ENCODE measurements at regions of chr12 and their contacts with region 1.

Region 1: GRCh38 chr12:120534203-120534702 is at the start of gene RNF10:
- DNase-seq: peak; percentile 78
- H3K4me3 Mint-ChIP-seq: peak within 1 kb of the TSS; percentile 92
- H3K27ac Mint-ChIP-seq: peak within 1 kb of the TSS; percentile 94
- H3K4me1 Mint-ChIP-seq: peaks cover 47% of the 10 kb centered on the region
- H3K27me3 Mint-ChIP-seq: no peaks in the 10 kb centered on the region
- total RNA-seq, gene RNF10: 159 to 166 TPM

Region 2: DNA sequence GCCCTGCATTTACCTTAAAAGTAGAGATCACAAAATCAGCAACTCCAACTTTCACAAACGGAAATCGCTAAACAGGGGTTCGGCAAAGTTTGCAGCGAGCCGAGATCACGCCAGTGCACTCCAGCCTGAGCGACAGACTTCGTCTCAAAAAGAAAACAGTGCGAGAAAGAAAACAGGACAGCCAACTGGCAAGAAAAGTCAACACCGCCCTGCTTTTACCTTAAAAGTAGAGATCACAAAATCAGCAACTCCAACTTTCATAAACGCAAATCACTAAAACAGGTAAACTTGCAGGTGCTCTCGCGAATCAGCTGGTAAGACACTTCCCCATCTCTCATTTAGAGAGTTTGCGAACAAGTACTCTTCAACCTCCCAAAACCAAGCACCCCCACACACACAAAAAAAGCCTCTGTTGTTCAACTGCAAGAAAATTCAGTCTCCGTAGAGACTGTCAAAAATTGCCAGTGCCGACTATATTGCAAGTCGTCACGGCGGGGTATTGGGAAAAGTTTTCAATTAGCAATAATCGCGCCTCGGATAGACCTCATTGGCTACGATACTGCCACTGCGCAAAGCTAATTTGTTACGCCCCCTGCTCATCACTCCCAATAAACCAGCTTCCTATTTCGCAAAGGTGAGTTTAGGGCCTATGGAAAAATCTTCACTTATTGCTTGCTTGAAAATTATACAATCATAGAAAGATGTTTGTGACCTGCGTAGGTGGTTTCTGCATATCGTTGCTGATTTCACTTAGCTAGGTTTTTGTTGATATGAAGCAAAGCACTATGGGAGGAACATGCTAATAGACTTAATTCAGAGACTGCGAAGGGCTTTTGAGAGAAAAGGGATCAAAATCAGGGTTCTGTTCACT is 241.4 kb before region 1 on chr12 and contains the start of gene RNU4-1:
- CTCF ChIA-PET with region 1: no interaction called
- intact Hi-C with region 1: loop called (anchors 1 kb)
- DNase-seq: peak; percentile 88
- H3K4me3 Mint-ChIP-seq: no peak within 1 kb of the TSS
- H3K27ac Mint-ChIP-seq: no peak within 1 kb of the TSS
- H3K4me1 Mint-ChIP-seq: peaks cover 6% of the 10 kb centered on the region
- H3K27me3 Mint-ChIP-seq: no peaks in the 10 kb centered on the region
- total RNA-seq, gene RNU4-1: 685 to 1,294 TPM

Region 3: DNA sequence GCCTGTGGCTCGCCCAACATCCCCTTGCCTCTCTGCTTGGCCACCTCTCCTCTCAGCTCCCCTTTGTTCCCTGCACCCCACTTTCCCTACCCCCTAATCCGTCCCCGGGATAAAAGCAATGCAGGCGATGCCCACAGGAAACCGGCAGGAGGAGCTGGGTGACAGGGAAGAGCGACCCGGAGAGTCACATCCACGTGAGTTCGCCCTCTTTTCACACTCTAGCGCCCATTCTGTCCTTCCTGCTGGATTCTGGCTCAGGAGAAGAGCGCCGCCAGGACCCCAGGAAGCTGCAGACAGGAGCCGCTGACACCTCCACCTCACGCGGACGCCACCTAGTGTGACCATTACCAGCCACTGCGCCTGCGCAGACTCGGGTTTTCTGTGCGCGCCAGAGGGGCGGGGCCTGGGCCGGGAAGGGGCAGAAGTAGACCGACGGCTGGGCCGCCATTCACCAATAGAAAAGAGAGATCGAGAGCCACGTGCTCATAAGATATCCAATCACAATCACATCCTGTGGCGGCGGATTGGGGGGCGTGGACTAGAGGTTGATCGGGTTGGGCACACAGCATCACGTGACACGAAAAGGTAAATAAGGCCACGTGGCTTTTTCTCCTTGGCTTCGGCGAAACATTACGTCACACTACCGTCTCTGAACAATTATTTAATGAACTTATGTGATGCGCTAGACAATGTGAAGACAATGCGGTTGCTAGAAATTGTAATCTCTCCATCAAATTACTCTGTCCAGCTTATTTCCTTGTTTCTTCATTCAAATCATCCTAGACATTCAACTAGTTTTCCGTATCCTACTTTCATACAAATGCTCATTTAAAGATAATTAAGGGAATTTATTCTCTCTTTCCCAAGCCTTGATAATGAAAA is 216.8 kb before region 1 on chr12:
- CTCF ChIA-PET with region 1: no interaction called
- intact Hi-C with region 1: loop called (anchors 1 kb)
- DNase-seq: peak; percentile 100
- H3K4me3 Mint-ChIP-seq: peak overlapping the region; percentile 87
- H3K27ac Mint-ChIP-seq: peak overlapping the region; percentile 88
- H3K4me1 Mint-ChIP-seq: peaks cover 11% of the 10 kb centered on the region
- H3K27me3 Mint-ChIP-seq: no peaks in the 10 kb centered on the region

Region 4: DNA sequence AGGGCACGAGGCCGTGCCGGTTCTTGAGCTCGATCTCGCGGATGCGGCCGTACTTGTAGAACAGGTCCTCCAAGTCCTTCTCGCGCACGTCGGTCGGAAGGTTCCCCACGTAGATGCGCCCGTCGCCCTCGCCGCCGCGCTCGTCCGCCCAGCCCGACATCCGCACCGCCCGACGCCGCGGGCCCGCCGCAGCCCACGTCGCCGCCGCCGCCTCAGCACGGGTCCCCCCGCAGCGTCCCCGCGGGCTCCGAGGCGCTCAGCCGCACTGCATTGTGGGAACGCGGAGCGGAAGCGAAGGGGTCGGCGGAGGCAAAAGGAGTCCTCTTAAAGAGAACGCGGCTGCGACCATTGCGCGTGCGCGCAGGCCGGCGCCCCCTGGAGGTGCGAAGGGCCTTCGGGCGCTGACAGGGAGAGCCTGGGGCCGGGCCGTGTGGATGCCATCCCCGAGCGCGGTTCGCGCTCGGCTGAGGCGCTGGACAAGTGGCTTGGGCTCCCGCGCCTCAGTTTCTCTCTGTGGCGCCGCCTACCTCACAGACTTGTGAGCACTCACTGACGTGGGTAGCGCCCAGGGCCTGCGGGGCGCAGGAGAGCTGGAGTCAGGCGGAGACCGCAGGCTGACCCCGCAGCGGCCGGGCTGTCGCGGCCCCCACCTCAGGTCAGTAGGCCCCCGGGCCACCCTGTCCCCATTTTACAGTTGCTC is 64.7 kb before region 1 on chr12 and contains the start of gene SRSF9:
- CTCF ChIA-PET with region 1: interaction called, 3 read pairs
- intact Hi-C with region 1: loop called (anchors 1 kb)
- DNase-seq: peak; percentile 96
- H3K4me3 Mint-ChIP-seq: peak within 1 kb of the TSS; percentile 90
- H3K27ac Mint-ChIP-seq: peak within 1 kb of the TSS; percentile 87
- H3K4me1 Mint-ChIP-seq: peaks cover 37% of the 10 kb centered on the region
- H3K27me3 Mint-ChIP-seq: no peaks in the 10 kb centered on the region
- total RNA-seq, gene SRSF9: 164 to 171 TPM

Region 5: DNA sequence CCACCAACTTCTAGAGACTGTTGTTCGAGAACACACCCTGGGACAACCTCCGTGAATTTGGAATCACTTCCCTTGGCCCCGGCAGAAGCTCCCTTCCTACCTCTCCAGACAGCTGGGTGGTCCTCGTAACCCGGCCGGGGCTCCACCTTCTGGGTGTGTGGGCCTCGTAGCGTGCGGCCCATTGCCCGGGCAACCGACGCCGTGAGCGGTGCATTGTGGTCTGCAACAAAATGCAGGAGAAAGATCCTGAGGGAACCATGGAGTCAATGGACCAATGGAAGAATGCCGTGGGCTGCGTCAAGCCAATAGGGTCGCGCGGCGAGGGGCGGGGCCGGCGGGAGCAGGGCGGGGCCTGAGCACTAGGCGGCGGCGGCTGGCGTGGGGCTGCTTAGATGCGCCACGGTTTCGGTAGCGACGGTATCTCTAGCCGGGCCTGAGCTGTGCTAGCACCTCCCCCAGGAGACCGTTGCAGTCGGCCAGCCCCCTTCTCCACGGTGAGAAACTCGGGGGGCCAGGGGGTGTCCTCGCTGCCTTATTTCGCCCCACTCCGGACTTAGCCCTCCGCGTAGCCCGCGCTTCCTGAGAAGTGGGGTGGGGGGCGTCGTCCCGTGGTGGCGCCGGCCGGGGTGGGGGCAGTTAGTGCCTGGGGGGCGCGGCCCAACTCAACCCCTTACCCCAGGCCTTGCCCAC is 38.4 kb before region 1 on chr12 and contains the start of gene DYNLL1:
- CTCF ChIA-PET with region 1: interaction called, 4 read pairs
- intact Hi-C with region 1: loop called (anchors 1 kb)
- DNase-seq: peak; percentile 97
- H3K4me3 Mint-ChIP-seq: peak within 1 kb of the TSS; percentile 84
- H3K27ac Mint-ChIP-seq: peak within 1 kb of the TSS; percentile 77
- H3K4me1 Mint-ChIP-seq: peaks cover 21% of the 10 kb centered on the region
- H3K27me3 Mint-ChIP-seq: no peaks in the 10 kb centered on the region
- total RNA-seq, gene DYNLL1: 93.4 to 93.5 TPM

Region 6: GRCh38 chr12:121038861-121039666 is 504.8 kb after region 1 on chr12 and contains the start of gene OASL:
- CTCF ChIA-PET with region 1: no interaction called
- intact Hi-C with region 1: loop called (anchors 5 kb)
- DNase-seq: peak; percentile 55
- H3K4me3 Mint-ChIP-seq: peak within 1 kb of the TSS; percentile 75
- H3K27ac Mint-ChIP-seq: peak within 1 kb of the TSS; percentile 70
- H3K4me1 Mint-ChIP-seq: peaks cover 50% of the 10 kb centered on the region
- H3K27me3 Mint-ChIP-seq: peaks cover 8% of the 10 kb centered on the region
- total RNA-seq, gene OASL: 12.4 to 13.4 TPM